Astrocyte of the cerebellum (primary cell): ENCODE measurements at regions of chr3 and their contacts with region 1.

Region 1: GRCh38 chr3:61725851-61726333 is 164.5 kb downstream of the PTPRG start:
- DNase-seq: peak; percentile 49
- H3K4me3 ChIP-seq: no peak overlapping the region
- CTCF ChIP-seq: no peak

Region 2: DNA sequence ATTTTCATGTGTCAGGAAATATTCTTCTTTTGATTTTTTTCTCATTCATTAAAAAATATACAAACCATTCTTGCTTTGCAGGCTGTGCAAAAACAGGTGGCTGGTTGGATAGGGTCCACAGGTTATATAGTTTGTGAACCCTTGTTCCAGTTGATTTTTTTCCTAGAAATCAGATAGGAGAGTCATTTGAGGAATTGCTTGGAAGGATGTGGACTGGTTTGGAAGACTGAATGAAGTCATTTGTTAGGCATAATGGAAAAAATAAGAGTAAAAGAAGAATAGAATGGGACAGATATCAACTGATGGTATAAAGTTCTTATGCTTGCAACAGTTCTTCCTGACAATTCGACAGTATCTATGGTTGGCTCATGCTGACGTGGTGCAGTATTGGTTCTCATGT is 24.9 kb after region 1 on chr3:
- in situ Hi-C with region 1: no loop called
- DNase-seq: no peak
- H3K4me3 ChIP-seq: no peak overlapping the region
- CTCF ChIP-seq: no peak

Region 3: GRCh38 chr3:61772441-61772840 is 46.5 kb after region 1 on chr3:
- in situ Hi-C with region 1: loop called (anchors 5 kb)
- DNase-seq: no peak
- H3K4me3 ChIP-seq: no peak overlapping the region
- CTCF ChIP-seq: no peak